Activated B cell treated with CpG ODN at 0.5 μM for 24 hours (primary cell): ENCODE measurements at regions of chr17 and their contacts with region 1.

Region 1: DNA sequence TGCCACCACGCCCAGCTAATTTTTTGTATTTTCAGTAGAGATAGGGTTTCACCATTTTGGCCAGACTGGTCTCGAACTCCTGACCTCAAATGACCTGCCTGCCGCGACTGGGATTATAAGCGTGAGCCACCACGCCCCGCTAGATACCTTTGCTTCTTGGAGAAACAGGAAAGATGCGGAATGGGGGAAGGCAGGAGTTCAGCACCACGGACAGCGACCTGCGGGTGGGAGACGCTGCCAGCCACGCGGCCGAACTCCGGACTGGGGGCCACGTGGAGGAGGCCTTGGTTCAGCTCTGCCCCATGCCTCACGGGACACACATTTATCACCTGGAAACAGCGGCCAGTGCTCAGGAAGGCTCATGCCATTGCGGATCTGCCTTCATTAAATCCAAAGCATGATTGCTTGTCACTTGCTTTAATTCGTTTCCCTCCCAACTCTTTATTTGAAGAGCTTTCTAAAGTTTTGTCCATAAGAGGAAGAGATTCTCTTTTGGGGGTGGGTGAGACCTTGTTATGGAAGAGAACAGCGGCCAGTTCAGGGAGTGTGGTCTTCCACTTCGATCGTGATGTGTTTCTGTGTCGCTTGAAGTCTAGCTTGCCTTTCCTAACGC is 219.9 kb downstream of the ENGASE start:
- DNase-seq: peak; percentile 34
- ATAC-seq: peak; percentile 25
- H3K4me3 Mint-ChIP-seq: no peak overlapping the region
- H3K27ac Mint-ChIP-seq: peak overlapping the region; percentile 7
- H3K4me1 Mint-ChIP-seq: no peaks in the 10 kb centered on the region
- H3K27me3 Mint-ChIP-seq: peaks cover 27% of the 10 kb centered on the region
- CTCF ChIP-seq: no peak

Region 2: GRCh38 chr17:79183221-79184158 is 111.1 kb before region 1 on chr17:
- CTCF ChIA-PET with region 1: no interaction called
- POLR2A ChIA-PET with region 1: no interaction called
- intact Hi-C with region 1: no loop called
- DNase-seq: no peak
- ATAC-seq: no peak
- H3K4me3 Mint-ChIP-seq: no peak overlapping the region
- H3K27ac Mint-ChIP-seq: no peak overlapping the region
- H3K4me1 Mint-ChIP-seq: peaks cover 2% of the 10 kb centered on the region
- H3K27me3 Mint-ChIP-seq: peaks cover 47% of the 10 kb centered on the region
- CTCF ChIP-seq: no peak

Region 3: GRCh38 chr17:79340333-79341221 is 46.0 kb after region 1 on chr17:
- CTCF ChIA-PET with region 1: no interaction called
- POLR2A ChIA-PET with region 1: no interaction called
- intact Hi-C with region 1: loop called (anchors 1 kb)
- DNase-seq: peak; percentile 51
- ATAC-seq: peak; percentile 83
- H3K4me3 Mint-ChIP-seq: peak overlapping the region; percentile 80
- H3K27ac Mint-ChIP-seq: peak overlapping the region; percentile 97
- H3K4me1 Mint-ChIP-seq: peaks cover 51% of the 10 kb centered on the region
- H3K27me3 Mint-ChIP-seq: peaks cover 6% of the 10 kb centered on the region
- CTCF ChIP-seq: no peak